Activated T-helper 2 cell treated with anti-CD3 and anti-CD28 coated beads, Interferon-gamma antibody, Interleukin-2, Interleukin-4, amounts not matched to agents 10 μg/mL and 5 μg/mL and 100 μg/mL, durations not matched to agents 14 hours and 24 hours and 36 hours (primary cell): ENCODE measurements at regions of chr2 and their contacts with region 1.

Region 1: DNA sequence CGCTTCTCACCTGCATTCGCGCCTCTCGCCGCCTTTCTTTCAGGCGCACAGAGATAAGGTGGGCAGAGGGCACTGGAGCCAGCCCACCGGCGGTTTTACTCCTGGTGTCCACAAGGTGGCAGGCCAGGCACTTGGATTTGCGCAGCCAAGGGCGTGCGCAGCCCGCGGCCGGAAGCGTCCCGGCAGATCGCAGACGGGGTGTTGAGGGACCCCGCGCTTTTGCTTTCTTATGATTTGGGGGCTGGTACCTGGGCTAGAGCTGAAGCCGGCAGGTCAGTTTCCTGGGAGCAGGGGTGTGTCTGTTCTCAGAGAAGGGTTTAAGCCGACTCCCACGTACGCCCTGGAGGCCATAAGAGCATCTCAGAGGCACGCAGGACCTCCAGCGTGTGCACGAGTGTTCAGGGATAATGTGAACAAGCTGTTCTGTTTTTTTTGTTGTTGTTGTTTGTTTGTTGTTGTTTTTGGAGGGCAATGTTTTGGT is 305.6 kb upstream of the CXCR4 start:
- DNase-seq: peak; percentile 70
- H3K4me3 Mint-ChIP-seq: peak overlapping the region; percentile 71
- H3K27ac Mint-ChIP-seq: no peak overlapping the region
- H3K4me1 Mint-ChIP-seq: peaks cover 20% of the 10 kb centered on the region
- H3K27me3 Mint-ChIP-seq: peaks cover 50% of the 10 kb centered on the region

Region 2: DNA sequence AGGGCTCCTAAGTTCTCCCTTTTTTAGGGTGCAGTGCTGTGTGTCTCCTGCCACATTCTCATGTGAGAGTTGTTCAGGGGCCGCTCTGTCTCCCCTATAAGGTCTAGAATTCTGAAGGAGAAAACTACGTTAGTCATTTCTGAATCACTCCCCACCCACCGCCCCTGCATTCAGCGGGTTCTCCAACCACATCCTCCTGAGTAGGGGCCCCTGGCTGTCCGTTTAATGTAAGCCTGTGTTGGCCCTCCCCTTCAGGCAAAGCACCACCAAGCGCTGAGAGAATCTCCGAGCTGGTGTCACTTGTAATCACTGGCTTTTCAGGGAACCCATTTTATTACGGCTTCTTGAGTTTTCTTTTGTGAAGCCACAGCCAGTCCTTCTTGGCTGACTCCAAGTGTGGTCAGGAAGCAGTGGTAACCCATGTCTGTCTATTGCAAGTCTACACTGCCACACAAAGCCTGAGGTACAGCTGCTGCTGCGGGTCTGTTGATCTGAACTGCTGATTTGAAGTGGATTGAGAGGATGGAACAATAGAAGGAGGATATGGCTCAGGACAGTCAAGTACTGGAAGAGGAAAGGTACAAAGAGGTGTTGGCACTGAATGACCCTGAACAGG is 603.4 kb before region 1 on chr2:
- intact Hi-C with region 1: loop called (anchors 1 kb)
- DNase-seq: peak; percentile 80
- H3K4me3 Mint-ChIP-seq: peak overlapping the region; percentile 71
- H3K27ac Mint-ChIP-seq: peak overlapping the region; percentile 87
- H3K4me1 Mint-ChIP-seq: peaks cover 39% of the 10 kb centered on the region
- H3K27me3 Mint-ChIP-seq: no peaks in the 10 kb centered on the region

Region 3: GRCh38 chr2:135913727-135914365 is 509.7 kb before region 1 on chr2:
- intact Hi-C with region 1: loop called (anchors 1 kb)
- DNase-seq: no peak
- H3K4me3 Mint-ChIP-seq: no peak overlapping the region
- H3K27ac Mint-ChIP-seq: peak overlapping the region; percentile 76
- H3K4me1 Mint-ChIP-seq: peaks cover 14% of the 10 kb centered on the region
- H3K27me3 Mint-ChIP-seq: no peaks in the 10 kb centered on the region

Region 4: DNA sequence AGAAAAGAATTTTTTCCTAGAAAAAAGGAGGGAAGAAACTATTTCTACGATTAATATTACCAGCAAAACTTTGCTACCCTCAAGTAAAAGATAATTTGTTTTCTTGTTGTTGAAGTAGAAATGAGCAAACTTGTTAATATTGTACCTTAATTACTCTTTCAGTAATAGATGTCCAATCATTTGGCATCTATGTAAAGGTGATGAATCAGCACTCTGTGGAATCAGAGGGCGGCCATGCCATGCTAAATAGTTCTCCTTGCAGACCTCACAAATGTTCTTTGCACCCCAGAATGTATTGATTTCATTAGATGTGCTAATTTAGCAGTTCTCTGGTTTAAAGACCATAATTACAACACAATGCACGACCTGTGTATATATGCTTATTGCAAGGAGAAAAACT is 312.7 kb after region 1 on chr2:
- intact Hi-C with region 1: loop called (anchors 2 kb)
- DNase-seq: no peak
- H3K4me3 Mint-ChIP-seq: no peak overlapping the region
- H3K27ac Mint-ChIP-seq: no peak overlapping the region
- H3K4me1 Mint-ChIP-seq: no peaks in the 10 kb centered on the region
- H3K27me3 Mint-ChIP-seq: peaks cover 2% of the 10 kb centered on the region

Region 5: DNA sequence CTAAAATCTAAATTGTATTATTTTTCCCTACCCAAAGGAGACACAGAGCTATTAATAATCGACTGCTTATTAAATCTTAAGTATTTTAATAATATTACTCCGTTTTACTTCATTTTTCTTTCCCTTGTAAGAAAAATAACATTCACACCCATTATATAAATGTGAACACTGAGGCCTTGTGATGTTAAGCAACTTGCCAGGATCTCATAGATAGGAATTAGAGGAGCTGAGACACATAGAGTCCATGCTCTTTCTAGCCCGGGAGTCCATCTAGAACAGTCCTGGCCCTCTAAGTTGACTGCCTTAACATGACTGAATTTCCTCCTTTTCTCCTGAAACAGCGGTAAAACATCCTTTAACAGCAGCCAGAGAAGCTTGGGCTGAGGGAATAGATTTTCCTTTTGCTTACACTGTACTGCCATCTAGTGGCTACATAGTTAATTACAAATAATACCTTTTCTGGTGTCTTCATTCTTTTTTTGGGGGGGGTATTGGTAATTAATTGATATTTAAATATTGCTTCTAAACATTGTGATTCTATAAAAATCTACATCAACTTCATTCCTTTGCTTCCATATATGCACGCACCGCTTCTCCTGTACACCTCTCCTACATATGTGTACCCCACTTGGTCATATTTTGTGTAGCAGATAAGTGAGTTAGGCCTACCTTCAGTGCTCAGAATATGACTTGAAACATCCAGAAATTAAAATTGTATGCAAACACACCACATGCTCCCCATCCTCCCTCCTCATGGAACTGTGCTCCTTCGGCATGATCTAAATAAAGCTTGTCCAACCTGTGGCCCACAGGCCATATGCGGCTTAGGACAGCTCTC is 1414.9 kb after region 1 on chr2:
- intact Hi-C with region 1: loop called (anchors 5 kb)
- DNase-seq: no peak
- H3K4me3 Mint-ChIP-seq: no peak overlapping the region
- H3K27ac Mint-ChIP-seq: no peak overlapping the region
- H3K4me1 Mint-ChIP-seq: no peaks in the 10 kb centered on the region
- H3K27me3 Mint-ChIP-seq: peaks cover 2% of the 10 kb centered on the region